Naive thymus-derived CD8-positive, alpha-beta T cell (primary cell): ENCODE measurements at regions of chr16 and their contacts with region 1.

Region 1: DNA sequence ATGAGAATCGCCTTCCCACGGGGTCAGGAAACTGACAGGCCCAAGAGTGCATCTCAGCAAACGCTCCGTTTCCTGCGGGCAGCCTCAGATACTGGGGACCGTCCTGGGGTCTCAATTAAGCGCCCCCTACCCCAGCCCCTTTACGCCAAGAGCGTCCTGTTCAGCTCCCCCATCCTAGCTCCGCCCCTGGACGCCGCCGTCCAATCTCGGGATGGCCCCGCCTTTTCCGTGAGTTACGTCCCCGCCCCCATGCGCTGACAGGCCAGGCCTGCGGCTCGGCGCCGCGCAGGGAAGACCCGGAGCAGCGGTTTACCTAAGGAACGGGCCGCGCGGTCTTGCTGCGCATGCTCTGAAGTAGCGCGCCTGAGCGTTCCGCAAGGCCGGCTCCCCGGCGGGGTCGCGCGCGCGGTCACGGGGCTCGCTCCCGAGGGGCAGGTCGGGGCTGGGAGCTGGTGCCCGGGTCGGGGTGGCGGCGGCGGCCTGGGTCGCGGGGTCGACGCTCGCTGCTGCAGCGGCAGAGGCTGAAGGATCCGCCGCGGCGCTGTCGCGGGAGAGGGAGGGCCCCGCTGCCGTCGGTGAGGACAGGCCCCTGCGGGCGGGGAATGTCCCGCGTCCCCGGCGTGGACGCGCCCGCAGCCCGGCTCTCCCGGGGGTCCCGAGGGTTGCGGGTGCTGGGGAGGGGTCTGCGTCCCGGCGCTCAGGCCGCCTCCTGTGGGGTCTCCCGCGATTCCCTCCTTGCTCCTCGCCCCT is at the start of gene FLYWCH1:
- DNase-seq: peak; percentile 94 to 98 (median 97)
- ATAC-seq: peak; percentile 96
- H3K4me3 Mint-ChIP-seq: peak within 1 kb of the TSS; percentile 83 to 97 (median 92)
- H3K27ac Mint-ChIP-seq: peak within 1 kb of the TSS; percentile 77 to 96 (median 93)
- H3K4me1 Mint-ChIP-seq: peaks cover 14 to 41% (median 33%) of the 10 kb centered on the region in 4 donors
- H3K27me3 Mint-ChIP-seq: no peaks in the 10 kb centered on the region
- polyA plus RNA-seq, gene FLYWCH1: 5.9 to 18.4 (median 13.5) TPM

Region 2: DNA sequence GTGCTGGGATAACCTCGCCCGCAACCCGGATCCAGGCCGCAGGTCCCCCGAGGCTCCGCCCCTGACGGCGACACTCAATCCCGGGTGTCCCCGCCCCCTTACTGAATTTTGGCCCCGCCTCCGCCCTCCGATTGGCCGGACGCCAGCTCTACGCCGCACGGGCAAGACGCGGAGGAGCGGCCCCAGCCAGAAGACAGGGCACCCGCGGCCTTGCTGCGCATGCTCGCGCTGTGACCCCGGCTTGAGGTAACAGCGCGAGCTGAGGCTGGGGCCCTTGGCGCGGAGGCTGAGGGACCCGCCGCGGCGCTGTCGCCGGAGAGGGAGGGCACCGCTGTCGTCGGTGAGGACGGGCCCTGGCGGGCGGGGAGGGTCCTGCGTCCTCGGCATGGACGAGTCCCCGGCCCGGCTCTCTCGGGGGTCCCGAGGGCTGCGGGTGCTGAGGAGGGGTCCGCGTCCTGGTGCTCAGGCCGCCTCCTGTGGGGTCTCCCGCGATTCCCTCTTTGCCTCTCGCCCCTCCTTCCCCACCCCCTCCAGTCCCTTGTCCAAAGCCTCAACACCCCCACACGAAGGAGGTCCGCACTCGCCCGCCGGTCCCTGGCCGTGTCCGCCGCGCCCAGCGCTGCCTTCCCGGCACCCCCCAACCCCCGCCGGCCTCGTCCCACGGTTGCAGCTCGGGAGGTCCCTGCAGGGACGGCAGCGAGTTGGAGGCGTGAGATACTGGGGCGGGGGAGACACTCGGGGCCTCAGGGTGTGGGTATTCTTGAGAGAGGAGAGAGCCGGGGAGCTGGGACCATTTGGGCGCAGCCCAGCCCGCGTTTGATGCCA is 28.5 kb before region 1 on chr16 and contains the start of gene FLYWCH2:
- POLR2A ChIA-PET with region 1: interaction called, 53 read pairs
- DNase-seq: peak; percentile 99 to 100 (median 100)
- ATAC-seq: peak; percentile 75 to 78
- H3K4me3 Mint-ChIP-seq: peak within 1 kb of the TSS; percentile 88 to 95 (median 93)
- H3K27ac Mint-ChIP-seq: peak within 1 kb of the TSS; percentile 93 to 99 (median 97)
- H3K4me1 Mint-ChIP-seq: peaks cover 10 to 20% (median 17%) of the 10 kb centered on the region in 4 donors
- H3K27me3 Mint-ChIP-seq: no peaks in the 10 kb centered on the region
- polyA plus RNA-seq, gene FLYWCH2: 18.0 to 28.8 (median 26.5) TPM